Endothelial cell of umbilical vein (primary cell): ENCODE measurements at regions of chr12 and their contacts with region 1.

Region 1: DNA sequence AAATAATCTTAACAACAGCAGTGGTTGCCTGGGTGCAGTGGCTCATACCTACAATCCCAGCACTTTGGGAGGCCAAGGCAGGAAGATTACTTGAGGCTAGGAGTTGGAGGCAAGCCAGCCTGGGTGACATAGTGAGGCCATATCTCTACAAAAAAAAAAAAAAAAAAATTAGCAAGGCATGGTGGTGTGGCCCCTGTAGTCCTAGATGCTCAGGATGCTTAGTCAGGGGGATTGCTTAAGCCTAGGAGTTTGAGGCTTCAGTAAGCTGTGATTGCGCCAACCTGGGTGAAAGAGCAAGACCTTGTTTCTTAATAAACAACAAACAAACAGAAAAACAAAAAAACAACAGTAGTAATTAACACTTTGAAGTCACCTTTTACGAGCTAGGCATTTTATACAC is 642 bp upstream of the ACSM4 start:
- DNase-seq: no peak
- H3K4me3 ChIP-seq: no peak overlapping the region
- H3K27ac ChIP-seq: no peak overlapping the region
- H3K4me1 ChIP-seq: no peaks in the 10 kb centered on the region
- H3K27me3 ChIP-seq: peaks cover 0 to 2% of the 10 kb centered on the region in 2 experiments
- CTCF ChIP-seq: no peak
- POLR2A ChIP-seq: no peak

Region 2: GRCh38 chr12:7319930-7320329 is 16.7 kb after region 1 on chr12:
- CTCF ChIA-PET with region 1: interaction called, 12 read pairs
- POLR2A ChIA-PET with region 1: no interaction called
- dilution Hi-C with region 1: no loop called
- intact Hi-C with region 1: no loop called
- DNase-seq: peak; percentile 46
- H3K4me3 ChIP-seq: no peak overlapping the region
- H3K27ac ChIP-seq: no peak overlapping the region
- H3K4me1 ChIP-seq: no peaks in the 10 kb centered on the region
- H3K27me3 ChIP-seq: no peaks in the 10 kb centered on the region
- CTCF ChIP-seq: peak; percentile 4 to 13
- POLR2A ChIP-seq: no peak

Region 3: DNA sequence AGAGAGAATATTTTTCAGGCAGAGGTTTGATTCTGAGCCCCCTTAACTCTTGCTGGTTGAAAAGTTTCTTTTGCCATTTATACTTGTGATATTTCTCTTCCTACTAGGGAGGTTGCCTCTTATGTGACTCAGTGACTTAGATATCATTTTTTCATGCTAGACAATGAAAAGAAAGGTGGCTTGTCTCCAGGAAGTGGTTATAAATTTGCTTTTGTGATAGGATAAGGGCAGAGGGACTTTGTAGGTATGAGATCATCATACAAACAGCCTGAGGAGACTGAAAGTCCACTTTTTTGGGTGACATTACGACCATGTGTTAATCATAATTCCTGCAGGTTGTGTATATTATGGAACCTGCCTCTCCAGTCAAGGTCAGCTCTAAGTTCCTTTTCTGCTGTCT is 36.4 kb after region 1 on chr12:
- CTCF ChIA-PET with region 1: no interaction called
- POLR2A ChIA-PET with region 1: no interaction called
- dilution Hi-C with region 1: no loop called
- intact Hi-C with region 1: no loop called
- DNase-seq: no peak
- H3K4me3 ChIP-seq: no peak overlapping the region
- H3K27ac ChIP-seq: no peak overlapping the region
- H3K4me1 ChIP-seq: peaks cover 4% of the 10 kb centered on the region
- H3K27me3 ChIP-seq: no peaks in the 10 kb centered on the region
- CTCF ChIP-seq: no peak
- POLR2A ChIP-seq: no peak